ENCODE measurements at regions of chr5 and their contacts with region 1.

Region 1: GRCh38 chr5:168679515-168679920 is 100.3 kb upstream of the PANK3 start:
- DNase-seq: peak in 4 of 5 donors; percentile 51 to 76 (median 70)
- ATAC-seq: peak in 3 of 4 donors; percentile 13 to 53 (median 43)
- H3K4me3 ChIP-seq: no peak overlapping the region
- H3K27ac ChIP-seq: no peak overlapping the region
- H3K4me1 ChIP-seq: peaks cover 3 to 31% (median 10%) of the 10 kb centered on the region in 12 donors
- H3K27me3 ChIP-seq: no peaks in the 10 kb centered on the region
- CTCF ChIP-seq: peak; percentile 78 to 95 (median 88)
- POLR2A ChIP-seq: no peak

Region 2: GRCh38 chr5:168651654-168652053 is 27.9 kb before region 1 on chr5:
- intact Hi-C with region 1: no loop called
- DNase-seq: no peak
- ATAC-seq: peak; percentile 37 to 82 (median 64)
- H3K4me3 ChIP-seq: no peak overlapping the region
- H3K27ac ChIP-seq: no peak overlapping the region
- H3K4me1 ChIP-seq: peaks cover 0 to 24% (median 7%) of the 10 kb centered on the region in 12 donors
- H3K27me3 ChIP-seq: no peaks in the 10 kb centered on the region
- CTCF ChIP-seq: no peak
- POLR2A ChIP-seq: no peak

Region 3: DNA sequence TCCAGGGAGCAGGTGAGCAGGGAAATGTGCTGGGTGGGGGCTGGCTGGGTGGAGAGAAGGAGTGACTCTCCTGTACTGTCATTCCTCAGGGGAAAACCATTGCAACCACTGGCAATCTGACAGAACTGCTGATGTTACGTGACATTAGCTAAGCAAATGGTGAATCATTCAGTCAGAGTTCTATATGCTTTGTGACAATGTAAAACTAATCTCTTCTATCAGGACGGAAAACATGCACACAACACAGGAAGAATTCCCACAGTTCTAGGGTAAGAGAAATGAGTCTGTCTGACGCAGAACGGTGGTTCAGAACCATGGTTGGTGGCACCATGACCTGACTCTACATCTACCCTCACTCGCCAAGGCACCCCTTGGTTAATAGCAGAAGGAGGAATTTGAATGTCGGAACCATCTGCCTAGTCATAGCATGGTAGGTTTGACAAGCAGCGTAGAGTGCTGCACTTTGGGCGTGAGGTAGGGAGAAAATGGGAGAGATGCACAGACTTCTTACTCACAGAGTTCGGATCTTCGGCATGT is 143.3 kb after region 1 on chr5:
- intact Hi-C with region 1: no loop called
- DNase-seq: peak in 1 of 5 donors; percentile 37
- ATAC-seq: peak in 1 of 4 donors; percentile 8
- H3K4me3 ChIP-seq: no peak overlapping the region
- H3K27ac ChIP-seq: peak overlapping the region in 1 of 12 donors; percentile 5
- H3K4me1 ChIP-seq: peaks cover 0 to 33% (median 5%) of the 10 kb centered on the region in 12 donors
- H3K27me3 ChIP-seq: no peaks in the 10 kb centered on the region
- CTCF ChIP-seq: no peak
- POLR2A ChIP-seq: no peak

Region 4: DNA sequence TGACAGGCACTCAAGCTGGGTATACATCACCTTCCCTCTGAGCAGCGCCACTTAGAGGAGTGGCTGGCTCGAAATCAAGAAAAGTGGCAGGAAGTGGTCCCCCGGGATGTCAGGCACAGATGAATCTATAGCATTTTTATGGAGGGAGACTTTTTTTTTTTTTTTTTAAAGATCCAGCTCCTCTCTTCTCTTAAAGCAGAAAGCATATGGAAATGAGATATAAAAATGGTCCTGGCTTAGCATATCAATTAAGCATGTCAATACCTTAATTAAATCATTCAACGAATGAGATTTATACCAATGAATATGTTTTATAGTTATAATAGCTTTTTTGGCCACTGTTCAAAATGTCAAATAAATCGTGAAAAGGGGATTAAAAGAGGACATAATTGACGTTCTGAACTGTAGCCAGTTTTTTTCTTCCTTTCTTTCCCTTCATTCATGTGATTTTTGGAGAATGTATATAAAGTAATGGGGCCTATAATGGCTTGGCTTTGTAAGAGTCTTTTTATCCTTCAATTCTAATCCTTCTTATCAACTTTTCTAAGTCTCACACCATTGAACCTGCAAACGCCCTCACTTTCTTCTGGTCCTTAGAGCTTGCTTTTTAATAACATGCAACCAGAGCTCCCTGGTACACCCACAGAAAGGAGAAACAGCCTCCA is 218.9 kb after region 1 on chr5:
- intact Hi-C with region 1: no loop called
- DNase-seq: no peak
- ATAC-seq: no peak
- H3K4me3 ChIP-seq: no peak overlapping the region
- H3K27ac ChIP-seq: no peak overlapping the region
- H3K4me1 ChIP-seq: peaks cover 0 to 7% (median 0%) of the 10 kb centered on the region in 12 donors
- H3K27me3 ChIP-seq: no peaks in the 10 kb centered on the region
- CTCF ChIP-seq: no peak
- POLR2A ChIP-seq: no peak

Region 5: GRCh38 chr5:168947212-168947868 is 267.8 kb after region 1 on chr5:
- intact Hi-C with region 1: loop called in 1 of 10 experiments (anchors 5 kb)
- DNase-seq: peak in 3 of 5 donors; percentile 18 to 37 (median 35)
- ATAC-seq: peak in 3 of 4 donors; percentile 39 to 75 (median 67)
- H3K4me3 ChIP-seq: no peak overlapping the region
- H3K27ac ChIP-seq: no peak overlapping the region
- H3K4me1 ChIP-seq: peaks cover 0 to 8% (median 0%) of the 10 kb centered on the region in 12 donors
- H3K27me3 ChIP-seq: no peaks in the 10 kb centered on the region
- CTCF ChIP-seq: peak; percentile 52 to 75 (median 61)
- POLR2A ChIP-seq: no peak

Region 6: GRCh38 chr5:169197343-169197742 is 517.8 kb after region 1 on chr5:
- intact Hi-C with region 1: loop called in 1 of 10 experiments (anchors 10 kb)
- DNase-seq: peak in 3 of 5 donors; percentile 14 to 35 (median 27)
- ATAC-seq: peak; percentile 42 to 77 (median 74)
- H3K4me3 ChIP-seq: no peak overlapping the region
- H3K27ac ChIP-seq: no peak overlapping the region
- H3K4me1 ChIP-seq: no peaks in the 10 kb centered on the region
- H3K27me3 ChIP-seq: no peaks in the 10 kb centered on the region
- CTCF ChIP-seq: peak in 11 of 12 donors; percentile 25 to 55 (median 41)
- POLR2A ChIP-seq: no peak

Region 7: GRCh38 chr5:169548315-169548714 is 868.8 kb after region 1 on chr5:
- intact Hi-C with region 1: loop called in 1 of 10 experiments (anchors 10 kb)
- DNase-seq: no peak
- ATAC-seq: peak in 3 of 4 donors; percentile 74 to 87 (median 79)
- H3K4me3 ChIP-seq: no peak overlapping the region
- H3K27ac ChIP-seq: no peak overlapping the region
- H3K4me1 ChIP-seq: no peaks in the 10 kb centered on the region
- H3K27me3 ChIP-seq: peaks cover 0 to 29% (median 6%) of the 10 kb centered on the region in 9 donors
- CTCF ChIP-seq: peak in 11 of 12 donors; percentile 18 to 61 (median 50)
- POLR2A ChIP-seq: no peak

Region 8: GRCh38 chr5:169583424-169584204 is 904.1 kb after region 1 on chr5 and contains the start of gene SPDL1:
- intact Hi-C with region 1: loop called in 6 of 10 experiments (anchors 2 to 10 kb)
- DNase-seq: peak; percentile 94 to 97 (median 95)
- ATAC-seq: peak; percentile 94 to 98 (median 97)
- H3K4me3 ChIP-seq: peak within 1 kb of the TSS; percentile 47 to 95 (median 73)
- H3K27ac ChIP-seq: peak within 1 kb of the TSS in 11 of 12 donors; percentile 41 to 82 (median 75)
- H3K4me1 ChIP-seq: peaks cover 0 to 21% (median 6%) of the 10 kb centered on the region in 12 donors
- H3K27me3 ChIP-seq: peaks cover 0 to 3% (median 0%) of the 10 kb centered on the region in 9 donors
- CTCF ChIP-seq: no peak
- POLR2A ChIP-seq: peak in 1 of 2 donors; percentile 88
- total RNA-seq, gene SPDL1: 3.3 to 7.0 (median 5.0) TPM

Measured in heart left ventricle (tissue), 16 donors.